Activated CD8-positive, alpha-beta T cell treated with anti-CD3 and anti-CD28 coated beads for 36 hours (primary cell): ENCODE measurements at regions of chr1 and their contacts with region 1.

Region 1: DNA sequence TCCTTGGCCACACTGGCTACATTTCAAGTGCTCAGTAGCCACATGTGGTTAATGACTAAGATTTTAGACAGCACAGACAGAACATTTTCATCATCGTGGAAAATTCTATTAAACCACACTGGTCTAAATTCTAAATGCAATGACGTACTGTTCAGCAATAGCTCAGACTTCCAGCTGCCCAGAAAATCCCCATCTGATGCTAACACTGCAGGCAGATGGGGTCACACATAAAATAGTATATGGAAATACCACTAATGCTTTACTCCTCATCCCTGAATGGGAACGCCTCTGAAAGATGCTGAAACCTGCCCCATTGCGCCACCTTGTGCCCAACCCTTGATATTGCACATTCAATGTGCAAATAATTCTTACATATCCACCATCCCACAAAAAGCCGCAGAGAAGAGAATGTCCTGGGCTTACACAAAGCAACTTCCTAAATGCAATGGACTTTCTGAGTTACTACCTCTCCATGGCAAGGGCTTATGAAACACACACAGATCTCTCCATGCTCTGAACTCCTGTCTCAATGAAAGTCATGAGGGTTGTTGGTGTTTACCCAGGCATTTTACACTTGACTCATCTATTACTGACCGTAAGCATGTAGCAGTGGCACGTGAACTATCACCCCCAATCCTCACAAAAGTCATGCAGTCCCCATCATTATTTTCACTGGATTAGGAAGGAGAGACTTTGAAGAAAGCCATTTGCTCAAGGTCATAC is 20.3 kb upstream of the SLC5A9 start:
- DNase-seq: peak; percentile 66
- ATAC-seq: peak; percentile 80
- H3K4me3 Mint-ChIP-seq: no peak overlapping the region
- H3K27ac Mint-ChIP-seq: no peak overlapping the region
- H3K4me1 Mint-ChIP-seq: peaks cover 6% of the 10 kb centered on the region
- H3K27me3 Mint-ChIP-seq: peaks cover 6% of the 10 kb centered on the region
- CTCF ChIP-seq: peak; percentile 89

Region 2: GRCh38 chr1:48109390-48110013 is 92.7 kb before region 1 on chr1:
- CTCF ChIA-PET with region 1: interaction called, 46 read pairs
- POLR2A ChIA-PET with region 1: no interaction called
- intact Hi-C with region 1: loop called (anchors 2 kb)
- DNase-seq: no peak
- ATAC-seq: no peak
- H3K4me3 Mint-ChIP-seq: no peak overlapping the region
- H3K27ac Mint-ChIP-seq: no peak overlapping the region
- H3K4me1 Mint-ChIP-seq: peaks cover 4% of the 10 kb centered on the region
- H3K27me3 Mint-ChIP-seq: peaks cover 7% of the 10 kb centered on the region
- CTCF ChIP-seq: peak; percentile 73

Region 3: DNA sequence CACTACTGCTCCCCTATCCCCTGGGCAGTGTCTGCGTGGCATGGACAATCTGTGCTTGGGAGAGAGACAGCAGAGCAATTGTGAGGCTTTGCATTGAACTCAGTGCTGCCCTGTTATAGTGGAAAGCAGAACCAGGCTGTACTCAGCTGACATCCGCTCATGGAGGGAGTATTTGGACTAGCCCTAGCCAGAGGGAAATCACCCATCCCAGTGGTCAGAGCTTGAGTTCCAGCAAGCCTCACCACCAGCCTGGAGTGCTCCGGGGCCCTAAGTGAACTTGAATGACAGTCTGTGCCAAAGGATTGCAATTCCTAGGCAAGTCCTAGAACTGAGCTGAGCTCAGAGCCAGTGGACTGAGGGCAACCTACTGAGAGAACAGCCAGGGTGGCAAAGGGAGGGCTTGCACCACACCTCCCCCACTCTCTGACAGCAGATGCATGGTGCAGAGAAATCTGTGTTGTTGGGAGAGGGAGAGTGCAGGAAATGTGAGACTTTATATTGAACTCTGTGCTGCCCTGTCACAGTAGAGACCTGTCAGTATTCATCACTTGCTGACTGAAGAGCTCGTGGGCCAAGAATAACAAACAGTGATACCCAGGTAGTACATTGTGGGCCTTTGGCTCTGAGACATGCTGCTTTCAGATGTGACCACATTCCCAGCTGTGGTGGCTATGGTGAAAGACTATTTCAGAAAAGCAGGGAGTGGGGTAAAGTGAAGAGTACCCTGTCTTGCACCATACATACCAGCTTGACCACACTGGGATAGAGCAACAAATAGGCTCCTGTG is 87.4 kb before region 1 on chr1:
- CTCF ChIA-PET with region 1: interaction called, 46 read pairs
- POLR2A ChIA-PET with region 1: no interaction called
- intact Hi-C with region 1: loop called (anchors 2 kb)
- DNase-seq: no peak
- ATAC-seq: no peak
- H3K4me3 Mint-ChIP-seq: no peak overlapping the region
- H3K27ac Mint-ChIP-seq: no peak overlapping the region
- H3K4me1 Mint-ChIP-seq: no peaks in the 10 kb centered on the region
- H3K27me3 Mint-ChIP-seq: peaks cover 6% of the 10 kb centered on the region
- CTCF ChIP-seq: no peak

Region 4: DNA sequence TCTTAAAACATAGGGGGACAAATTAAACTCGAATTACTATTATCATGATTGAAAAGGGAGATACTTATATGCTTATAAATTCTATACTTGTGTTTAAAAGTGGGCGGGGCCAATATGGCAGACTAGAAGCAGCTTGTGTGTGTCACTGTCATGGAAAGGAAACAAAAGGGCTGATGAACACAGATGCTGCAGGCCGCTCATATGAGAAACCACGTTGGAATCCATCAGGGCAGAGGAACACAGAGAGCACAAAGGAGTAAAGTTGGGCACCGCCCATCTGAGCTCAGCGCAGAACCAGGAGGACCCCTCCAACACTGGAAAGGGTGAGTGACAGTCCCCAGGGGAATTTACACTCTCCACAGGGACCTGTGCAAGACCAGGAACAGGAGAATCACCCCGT is 127.3 kb after region 1 on chr1:
- CTCF ChIA-PET with region 1: no interaction called
- POLR2A ChIA-PET with region 1: no interaction called
- intact Hi-C with region 1: no loop called
- DNase-seq: no peak
- ATAC-seq: no peak
- H3K4me3 Mint-ChIP-seq: no peak overlapping the region
- H3K27ac Mint-ChIP-seq: no peak overlapping the region
- H3K4me1 Mint-ChIP-seq: no peaks in the 10 kb centered on the region
- H3K27me3 Mint-ChIP-seq: no peaks in the 10 kb centered on the region
- CTCF ChIP-seq: no peak